CD8-positive, alpha-beta T cell (primary cell): ENCODE measurements at regions of chr20 and their contacts with region 1.

Region 1: GRCh38 chr20:354298-355064 is 7.6 kb downstream of the NRSN2 start:
- DNase-seq: peak; percentile 64 to 90 (median 80)
- ATAC-seq: peak; percentile 100
- H3K4me3 ChIP-seq: no peak overlapping the region
- H3K4me3 Mint-ChIP-seq: no peak overlapping the region
- H3K27ac ChIP-seq: no peak overlapping the region
- H3K27ac Mint-ChIP-seq: no peak overlapping the region
- H3K4me1 ChIP-seq: peaks cover 6% of the 10 kb centered on the region
- H3K4me1 Mint-ChIP-seq: no peaks in the 10 kb centered on the region
- H3K27me3 ChIP-seq: no peaks in the 10 kb centered on the region
- H3K27me3 Mint-ChIP-seq: no peaks in the 10 kb centered on the region
- CTCF ChIP-seq: peak; percentile 79

Region 2: DNA sequence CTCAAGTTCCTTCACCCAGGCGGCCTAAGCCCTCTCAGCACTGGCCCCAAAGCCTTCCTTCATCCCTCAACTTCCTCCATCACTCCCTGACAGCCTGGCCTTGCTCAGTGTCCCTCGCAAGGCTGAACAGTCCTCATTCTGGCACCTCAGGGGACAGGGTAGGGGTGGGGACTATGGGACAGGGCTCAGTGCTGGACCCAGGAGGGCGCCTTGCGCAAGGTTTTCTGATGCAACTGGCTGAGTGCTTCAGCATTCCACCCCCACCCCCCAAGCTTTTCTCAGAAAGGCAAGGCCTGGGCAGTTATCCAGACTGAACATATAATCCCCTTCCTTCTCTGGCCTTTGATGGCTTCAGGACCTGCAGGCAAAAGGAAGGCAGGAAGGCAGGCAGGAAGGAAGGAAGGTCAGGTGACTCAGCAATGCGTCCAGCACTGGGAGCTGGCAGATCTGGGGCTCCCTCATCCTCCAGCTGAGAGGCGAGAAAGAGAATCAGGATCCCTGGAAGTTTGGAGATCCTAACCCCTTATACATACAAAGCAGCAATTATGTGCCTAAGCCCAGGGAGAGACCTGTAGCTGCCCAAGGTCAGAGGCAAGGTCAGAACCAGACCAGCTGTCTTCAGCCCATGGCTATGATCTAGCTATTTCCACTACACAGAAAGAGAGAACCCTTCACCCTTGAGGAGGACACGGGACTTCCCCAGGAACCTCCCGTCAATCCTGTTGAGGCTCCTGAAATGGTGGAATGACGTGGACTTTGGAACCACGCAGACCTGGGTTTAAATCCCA is 17.5 kb after region 1 on chr20:
- CTCF ChIA-PET with region 1: interaction called, 26 read pairs
- POLR2A ChIA-PET with region 1: no interaction called
- intact Hi-C with region 1: no loop called
- DNase-seq: peak in 1 of 9 experiments; percentile 23
- ATAC-seq: no peak
- H3K4me3 ChIP-seq: no peak overlapping the region
- H3K4me3 Mint-ChIP-seq: no peak overlapping the region
- H3K27ac ChIP-seq: no peak overlapping the region
- H3K27ac Mint-ChIP-seq: no peak overlapping the region
- H3K4me1 ChIP-seq: no peaks in the 10 kb centered on the region
- H3K4me1 Mint-ChIP-seq: peaks cover 2% of the 10 kb centered on the region
- H3K27me3 ChIP-seq: no peaks in the 10 kb centered on the region
- H3K27me3 Mint-ChIP-seq: no peaks in the 10 kb centered on the region
- CTCF ChIP-seq: no peak

Region 3: DNA sequence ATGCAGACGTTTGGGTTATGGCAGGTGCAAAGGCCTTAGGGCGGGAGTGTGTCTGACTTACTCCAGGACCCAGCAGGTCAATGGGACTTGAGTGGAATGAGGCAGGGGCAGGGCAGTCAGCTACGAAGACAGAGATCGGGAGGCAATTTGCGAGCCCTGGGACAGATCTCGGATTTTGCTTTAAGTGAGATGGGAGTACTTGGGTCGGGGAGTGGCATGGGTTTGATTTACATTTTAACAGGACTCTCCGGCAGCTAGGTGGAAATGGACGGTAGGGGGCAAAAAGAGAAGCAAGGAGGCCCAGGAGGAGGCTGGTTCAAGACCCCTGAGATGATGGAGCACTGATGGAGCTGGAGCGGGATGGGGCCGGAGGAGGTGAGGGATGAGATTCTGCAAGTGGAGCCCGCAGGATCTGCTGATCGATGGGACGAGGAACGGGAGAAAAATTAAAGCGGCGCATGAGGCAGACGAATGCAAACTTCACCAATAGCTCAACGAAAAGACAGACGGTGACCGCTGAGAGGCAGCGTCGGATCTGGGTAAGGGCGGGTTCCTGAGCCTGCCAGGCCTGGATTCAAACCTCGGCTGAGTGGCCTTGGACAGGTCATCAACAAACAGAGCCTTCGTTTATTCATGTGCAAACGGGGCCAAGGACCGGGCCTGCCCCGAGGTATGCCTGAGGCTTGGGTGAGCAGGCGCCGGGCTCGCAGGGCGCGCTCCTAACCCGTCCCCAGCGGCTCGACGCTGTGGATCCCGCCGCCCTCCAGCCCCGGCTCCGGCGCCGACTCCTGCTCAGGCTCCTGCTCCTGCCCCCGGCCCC is 52.9 kb after region 1 on chr20:
- CTCF ChIA-PET with region 1: interaction called, 6 read pairs
- POLR2A ChIA-PET with region 1: no interaction called
- intact Hi-C with region 1: loop called (anchors 1 to 2 kb)
- DNase-seq: peak in 7 of 9 experiments; percentile 48 to 83 (median 68)
- ATAC-seq: peak; percentile 71
- H3K4me3 ChIP-seq: peak overlapping the region; percentile 56 to 71
- H3K4me3 Mint-ChIP-seq: peak overlapping the region; percentile 91
- H3K27ac ChIP-seq: peak overlapping the region; percentile 9 to 41
- H3K27ac Mint-ChIP-seq: peak overlapping the region; percentile 95
- H3K4me1 ChIP-seq: peaks cover 34% of the 10 kb centered on the region
- H3K4me1 Mint-ChIP-seq: peaks cover 47% of the 10 kb centered on the region
- H3K27me3 ChIP-seq: no peaks in the 10 kb centered on the region
- H3K27me3 Mint-ChIP-seq: no peaks in the 10 kb centered on the region
- CTCF ChIP-seq: peak; percentile 45

Region 4: DNA sequence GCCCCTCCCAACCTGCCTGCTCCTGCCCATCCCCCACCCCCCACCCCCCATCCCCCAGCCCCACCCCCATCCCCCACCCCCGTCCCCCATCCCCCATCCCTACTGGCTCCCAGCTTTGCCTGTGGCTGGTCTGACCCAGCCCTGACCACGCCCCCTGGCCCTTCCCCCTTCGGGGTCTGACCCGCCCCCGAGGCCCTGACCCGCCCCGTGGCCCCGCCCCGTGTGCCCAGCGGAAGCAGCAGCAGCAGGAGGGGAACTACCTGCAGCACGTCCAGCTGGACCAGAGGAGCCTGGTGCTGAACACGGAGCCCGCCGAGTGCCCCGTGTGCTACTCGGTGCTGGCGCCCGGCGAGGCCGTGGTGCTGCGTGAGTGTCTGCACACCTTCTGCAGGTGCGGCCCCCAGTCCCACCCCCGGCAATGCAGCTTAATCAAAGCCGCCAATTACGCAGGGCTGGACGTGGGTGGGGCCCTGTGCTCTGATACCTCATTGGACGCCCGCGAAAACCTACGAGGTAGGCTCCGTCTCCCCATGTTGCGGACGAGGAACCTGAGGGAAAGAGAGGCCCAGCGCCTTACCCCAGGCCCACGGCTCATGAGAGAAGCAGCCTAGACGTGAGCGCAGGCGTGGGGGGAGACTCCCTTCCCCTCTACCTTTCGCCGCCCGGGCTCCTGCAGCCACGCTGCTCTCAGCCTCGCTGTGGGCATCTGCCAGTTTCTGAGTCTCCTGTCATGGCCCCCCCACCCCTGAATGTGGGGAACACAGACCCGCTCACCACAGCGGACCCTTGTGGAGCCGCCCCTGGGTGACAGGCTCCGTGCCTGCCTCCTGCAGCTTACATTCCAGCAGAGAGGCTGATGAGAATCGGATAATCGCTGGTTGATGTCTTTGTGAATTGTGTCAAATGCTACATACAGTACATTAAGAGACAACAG is 66.4 kb after region 1 on chr20:
- CTCF ChIA-PET with region 1: no interaction called
- POLR2A ChIA-PET with region 1: no interaction called
- intact Hi-C with region 1: no loop called
- DNase-seq: no peak
- ATAC-seq: no peak
- H3K4me3 ChIP-seq: no peak overlapping the region
- H3K4me3 Mint-ChIP-seq: no peak overlapping the region
- H3K27ac ChIP-seq: no peak overlapping the region
- H3K27ac Mint-ChIP-seq: no peak overlapping the region
- H3K4me1 ChIP-seq: no peaks in the 10 kb centered on the region
- H3K4me1 Mint-ChIP-seq: peaks cover 10% of the 10 kb centered on the region
- H3K27me3 ChIP-seq: no peaks in the 10 kb centered on the region
- H3K27me3 Mint-ChIP-seq: no peaks in the 10 kb centered on the region
- CTCF ChIP-seq: no peak

Region 5: DNA sequence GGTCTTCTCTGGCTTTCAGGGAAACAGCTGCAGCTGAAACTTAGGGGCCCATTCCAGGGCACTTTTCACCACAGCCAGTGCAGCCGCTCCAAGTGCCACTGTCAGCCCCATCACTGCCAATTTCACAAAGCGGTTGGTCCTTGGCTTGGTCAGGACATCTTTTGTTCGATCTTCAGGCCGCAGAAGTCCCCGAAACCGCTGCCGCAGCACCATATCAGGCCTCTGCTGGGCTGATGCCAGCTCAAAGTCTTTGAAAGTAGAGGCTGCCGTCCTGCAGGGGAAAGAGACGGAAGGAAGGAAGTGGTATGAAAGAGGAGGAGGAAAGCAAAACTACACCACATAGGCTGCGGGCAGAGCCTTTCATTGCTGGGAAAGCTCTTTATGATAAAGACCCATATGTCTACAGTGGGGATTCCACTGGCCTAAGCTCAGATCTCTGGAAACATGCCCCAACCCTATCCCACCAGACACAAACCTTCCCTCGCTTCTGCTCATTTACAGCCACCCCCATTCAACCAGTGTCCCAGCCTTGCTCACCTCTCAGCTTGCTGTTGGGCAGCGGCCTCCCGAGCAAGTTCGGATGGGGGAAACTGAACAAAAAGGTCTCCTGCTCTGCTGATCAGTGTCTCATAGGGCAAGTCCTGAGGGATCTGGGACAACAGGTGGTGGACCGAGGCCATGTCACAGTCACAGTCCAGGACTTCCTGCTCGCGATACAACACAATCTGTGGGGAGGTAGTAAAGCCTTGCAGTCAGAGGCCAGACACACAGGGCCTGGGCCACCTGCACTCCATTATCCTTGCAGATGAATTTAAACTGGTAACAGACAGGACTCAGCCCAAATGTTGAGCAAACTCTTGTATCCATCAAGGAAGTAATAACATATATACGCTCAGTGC is 84.3 kb after region 1 on chr20:
- CTCF ChIA-PET with region 1: interaction called, 4 read pairs
- POLR2A ChIA-PET with region 1: no interaction called
- intact Hi-C with region 1: loop called in 1 of 2 experiments (anchors 2 kb)
- DNase-seq: peak; percentile 18 to 86 (median 65)
- ATAC-seq: peak; percentile 80
- H3K4me3 ChIP-seq: peak overlapping the region; percentile 31 to 43
- H3K4me3 Mint-ChIP-seq: peak overlapping the region; percentile 74
- H3K27ac ChIP-seq: peak overlapping the region in 1 of 2 experiments; percentile 55
- H3K27ac Mint-ChIP-seq: peak overlapping the region; percentile 47
- H3K4me1 ChIP-seq: peaks cover 39% of the 10 kb centered on the region
- H3K4me1 Mint-ChIP-seq: peaks cover 50% of the 10 kb centered on the region
- H3K27me3 ChIP-seq: no peaks in the 10 kb centered on the region
- H3K27me3 Mint-ChIP-seq: no peaks in the 10 kb centered on the region
- CTCF ChIP-seq: no peak

Region 6: DNA sequence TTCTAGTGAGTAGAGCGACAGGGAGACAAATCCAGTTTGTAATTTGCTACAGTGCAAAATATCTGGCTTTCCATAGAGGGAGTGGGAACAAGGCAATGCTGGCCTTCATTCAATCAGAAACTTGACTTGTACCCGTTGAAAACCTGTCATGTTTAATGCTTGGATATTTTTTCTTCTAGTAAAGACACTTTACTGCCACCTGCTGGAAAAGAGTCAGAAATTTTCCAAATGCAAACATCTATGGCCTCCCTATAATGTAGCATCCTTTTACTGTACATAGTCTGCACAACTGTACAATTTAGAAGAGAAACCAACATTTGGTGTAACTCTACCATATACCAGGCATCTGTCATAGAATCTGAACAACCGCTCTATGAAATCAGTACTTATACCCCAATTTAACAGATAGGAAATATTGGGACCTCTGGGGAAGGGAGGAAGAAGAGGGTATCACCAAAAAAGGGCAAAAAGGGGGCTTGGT is 124.5 kb after region 1 on chr20:
- CTCF ChIA-PET with region 1: interaction called, 79 read pairs
- POLR2A ChIA-PET with region 1: no interaction called
- intact Hi-C with region 1: loop called (anchors 1 kb)
- DNase-seq: peak in 4 of 9 experiments; percentile 20 to 80 (median 58)
- ATAC-seq: peak; percentile 86
- H3K4me3 ChIP-seq: no peak overlapping the region
- H3K4me3 Mint-ChIP-seq: no peak overlapping the region
- H3K27ac ChIP-seq: no peak overlapping the region
- H3K27ac Mint-ChIP-seq: no peak overlapping the region
- H3K4me1 ChIP-seq: peaks cover 13% of the 10 kb centered on the region
- H3K4me1 Mint-ChIP-seq: peaks cover 19% of the 10 kb centered on the region
- H3K27me3 ChIP-seq: no peaks in the 10 kb centered on the region
- H3K27me3 Mint-ChIP-seq: no peaks in the 10 kb centered on the region
- CTCF ChIP-seq: peak; percentile 82

Region 7: GRCh38 chr20:667391-667964 is 313.0 kb after region 1 on chr20:
- CTCF ChIA-PET with region 1: interaction called, 3 read pairs
- POLR2A ChIA-PET with region 1: no interaction called
- intact Hi-C with region 1: loop called in 1 of 2 experiments (anchors 2 kb)
- DNase-seq: peak; percentile 24 to 71 (median 59)
- ATAC-seq: no peak
- H3K4me3 ChIP-seq: no peak overlapping the region
- H3K4me3 Mint-ChIP-seq: no peak overlapping the region
- H3K27ac ChIP-seq: no peak overlapping the region
- H3K27ac Mint-ChIP-seq: no peak overlapping the region
- H3K4me1 ChIP-seq: no peaks in the 10 kb centered on the region
- H3K4me1 Mint-ChIP-seq: peaks cover 3% of the 10 kb centered on the region
- H3K27me3 ChIP-seq: peaks cover 0 to 11% of the 10 kb centered on the region in 2 experiments
- H3K27me3 Mint-ChIP-seq: peaks cover 52% of the 10 kb centered on the region
- CTCF ChIP-seq: peak; percentile 64